K562 (cell line): ENCODE measurements at regions of chr4 and their contacts with region 1.

Region 1: DNA sequence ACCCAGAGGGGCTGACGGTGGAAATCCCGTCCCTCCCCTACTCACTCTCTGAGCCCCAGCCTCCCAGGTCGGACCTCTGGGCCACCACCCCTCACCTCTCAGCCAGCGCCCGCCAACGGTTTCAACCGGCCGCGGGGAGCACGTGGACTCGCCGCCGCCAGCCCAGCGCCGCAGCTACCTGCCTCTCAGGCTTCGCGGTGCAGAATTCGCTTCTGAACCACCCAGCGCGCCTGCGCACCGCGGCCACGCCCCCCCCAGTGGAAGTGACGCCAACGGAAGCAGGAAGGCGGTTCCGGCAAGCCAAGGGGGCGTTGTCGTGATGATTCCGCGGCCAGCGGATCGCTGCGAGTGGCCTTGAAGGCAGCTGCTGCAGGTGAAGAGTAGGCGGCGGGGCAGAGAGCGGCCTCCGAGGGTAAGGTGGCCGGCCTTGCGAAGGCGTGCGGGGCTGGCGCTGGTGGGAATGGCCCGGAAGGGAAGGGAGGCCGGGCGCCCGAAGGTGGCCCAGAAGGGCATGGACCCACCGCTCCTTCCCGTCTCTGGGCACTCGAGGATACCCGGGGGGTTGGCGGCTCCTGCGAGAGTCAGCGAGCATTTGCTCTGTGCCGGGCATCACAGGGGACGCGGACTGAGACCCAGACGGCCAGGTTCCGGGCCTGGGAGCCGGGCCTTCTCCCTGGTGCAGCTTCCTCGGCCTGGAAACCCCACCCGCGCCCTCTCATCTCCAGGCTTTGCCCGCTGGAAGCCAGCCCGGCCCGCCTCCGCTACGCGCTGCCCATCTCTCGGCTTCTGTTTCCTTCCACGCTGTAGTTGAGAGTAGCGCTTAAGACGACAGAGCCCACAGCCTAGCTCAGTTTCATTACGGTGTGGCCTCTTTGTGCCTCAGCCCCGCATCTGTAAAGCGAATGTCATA is at the starts of genes LYAR and ZBTB49:
- DNase-seq: peak; percentile 94 to 96 (median 94)
- ATAC-seq: peak; percentile 95
- H3K4me3 ChIP-seq: peak within 1 kb of the TSS; percentile 85
- H3K27ac ChIP-seq: peak within 1 kb of the TSS; percentile 83
- H3K4me1 ChIP-seq: peaks cover 11 to 20% of the 10 kb centered on the region in 2 experiments; a peak in 4 of 5 replicates
- H3K27me3 ChIP-seq: no peaks in the 10 kb centered on the region; a peak in 1 of 5 replicates
- CTCF ChIP-seq: no peak
- EP300 ChIP-seq: no peak
- POLR2A ChIP-seq: peak; percentile 92
- RAD21 ChIP-seq: no peak
- polyA plus RNA-seq, gene LYAR: 28.3 to 28.9 TPM
- polyA plus RNA-seq, gene ZBTB49: 0.49 to 0.69 TPM

Region 2: GRCh38 chr4:4204401-4204745 is 85.8 kb before region 1 on chr4:
- CTCF ChIA-PET with region 1: no interaction called
- POLR2A ChIA-PET with region 1: no interaction called
- in situ Hi-C with region 1: no loop called
- intact Hi-C with region 1: no loop called
- DNase-seq: no peak
- ATAC-seq: no peak
- H3K4me3 ChIP-seq: no peak overlapping the region
- H3K27ac ChIP-seq: no peak overlapping the region
- H3K4me1 ChIP-seq: no peaks in the 10 kb centered on the region; a peak in 1 of 5 replicates
- H3K27me3 ChIP-seq: peaks cover 2 to 23% of the 10 kb centered on the region in 2 experiments; a peak in 2 of 5 replicates
- CTCF ChIP-seq: no peak
- EP300 ChIP-seq: no peak
- POLR2A ChIP-seq: no peak
- RAD21 ChIP-seq: no peak

Region 3: DNA sequence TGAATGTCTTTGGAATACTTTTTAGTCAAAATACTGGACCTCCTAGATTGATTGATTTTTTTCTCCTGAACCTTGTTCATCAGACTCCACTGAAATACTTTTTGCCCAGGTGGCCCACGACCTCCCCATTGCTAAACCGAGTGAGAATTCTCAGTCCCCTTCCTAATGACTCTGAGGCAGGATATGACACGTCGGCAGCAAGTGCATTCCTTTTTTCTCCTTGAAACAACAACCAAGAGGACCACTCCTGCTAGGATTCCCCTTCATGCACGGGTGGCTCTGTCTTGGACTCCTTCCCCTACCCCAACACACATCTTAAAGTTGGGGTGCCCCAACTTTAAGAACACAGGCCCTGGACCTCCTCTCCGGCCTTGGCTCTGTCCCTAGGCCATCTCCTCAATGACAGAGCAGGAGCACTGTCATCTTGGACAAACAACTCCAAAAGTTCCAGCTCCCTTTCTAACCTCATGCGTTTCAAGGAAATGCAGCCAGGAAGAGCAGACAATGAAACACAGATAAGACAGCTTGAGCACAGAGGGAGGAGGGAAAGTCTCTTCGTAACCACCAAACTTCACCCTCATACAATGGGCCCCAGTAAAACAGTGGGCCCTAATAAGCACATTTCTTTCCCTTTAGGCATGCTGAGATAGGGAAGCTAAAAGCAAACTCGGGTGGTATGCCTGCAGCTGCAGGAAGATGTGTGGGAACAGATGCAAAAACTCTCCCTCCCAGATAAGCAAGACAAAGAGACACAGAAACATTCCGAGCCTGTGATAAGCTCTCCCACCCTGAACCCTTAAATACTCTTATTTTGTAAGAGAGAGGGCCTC is 33.7 kb after region 1 on chr4:
- CTCF ChIA-PET with region 1: no interaction called
- POLR2A ChIA-PET with region 1: interaction called, 3 read pairs
- in situ Hi-C with region 1: no loop called
- intact Hi-C with region 1: loop called (anchors 5 kb)
- DNase-seq: peak; percentile 30 to 84 (median 36)
- ATAC-seq: peak; percentile 43
- H3K4me3 ChIP-seq: no peak overlapping the region
- H3K27ac ChIP-seq: peak overlapping the region; percentile 91
- H3K4me1 ChIP-seq: peaks cover 34 to 44% of the 10 kb centered on the region in 2 experiments; a peak in 4 of 5 replicates
- H3K27me3 ChIP-seq: no peaks in the 10 kb centered on the region
- CTCF ChIP-seq: no peak
- EP300 ChIP-seq: peak; percentile 50; the same call in 1 of the 2 replicates
- POLR2A ChIP-seq: no peak
- RAD21 ChIP-seq: no peak